Activated naive CD4-positive, alpha-beta T cell treated with anti-CD3 and anti-CD28 coated beads for 36 hours (primary cell): ENCODE measurements at regions of chr7 and their contacts with region 1.

Region 1: DNA sequence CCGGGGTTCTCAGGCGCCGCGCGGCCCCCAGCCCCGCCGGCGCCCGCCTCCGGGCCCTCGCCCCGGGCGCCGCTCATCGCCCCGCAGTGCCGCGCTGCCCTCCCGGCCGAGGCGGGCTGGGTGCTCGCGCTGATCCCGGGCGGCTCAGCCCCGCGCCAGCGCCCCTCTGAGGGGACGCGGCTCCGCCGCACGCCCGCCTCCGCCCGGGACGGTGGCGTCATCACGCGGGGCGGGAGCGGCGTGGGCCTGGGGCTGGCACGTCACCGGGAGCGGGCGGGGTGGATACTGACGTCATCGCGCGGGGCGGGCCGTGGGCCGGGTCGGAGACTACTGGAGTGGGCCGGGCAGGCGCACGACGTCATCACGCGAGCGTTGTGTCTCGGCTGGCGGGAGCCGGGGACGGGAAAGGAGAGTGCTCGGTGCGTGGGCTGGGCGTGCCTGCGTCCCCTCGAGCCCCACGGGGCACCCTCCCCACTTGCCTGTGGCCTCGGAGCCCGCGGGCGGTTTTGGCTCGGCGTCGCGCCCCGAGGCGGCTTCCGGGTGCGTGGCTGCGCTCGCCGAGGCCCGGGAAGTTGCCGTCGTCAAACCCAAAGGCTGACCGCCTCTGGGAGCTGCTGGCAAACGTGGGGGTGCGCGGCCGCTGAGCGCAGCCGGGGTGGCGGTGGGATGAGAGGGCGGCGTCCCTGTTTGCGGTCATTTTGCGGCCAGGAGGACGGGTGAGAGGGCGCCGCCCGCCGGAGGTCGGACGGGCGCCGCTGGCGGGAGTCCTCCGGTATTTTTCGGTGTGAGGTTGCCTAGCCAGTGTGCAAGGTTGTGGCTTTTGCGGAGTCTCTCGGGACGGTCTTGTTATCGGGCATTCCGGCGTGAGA is at the start of gene ESYT2:
- DNase-seq: peak; percentile 98
- H3K4me3 Mint-ChIP-seq: peak within 1 kb of the TSS; percentile 98
- H3K27ac Mint-ChIP-seq: peak within 1 kb of the TSS; percentile 94
- H3K4me1 Mint-ChIP-seq: peaks cover 27% of the 10 kb centered on the region
- H3K27me3 Mint-ChIP-seq: no peaks in the 10 kb centered on the region
- total RNA-seq, gene ESYT2: 41.7 to 44.3 TPM

Region 2: DNA sequence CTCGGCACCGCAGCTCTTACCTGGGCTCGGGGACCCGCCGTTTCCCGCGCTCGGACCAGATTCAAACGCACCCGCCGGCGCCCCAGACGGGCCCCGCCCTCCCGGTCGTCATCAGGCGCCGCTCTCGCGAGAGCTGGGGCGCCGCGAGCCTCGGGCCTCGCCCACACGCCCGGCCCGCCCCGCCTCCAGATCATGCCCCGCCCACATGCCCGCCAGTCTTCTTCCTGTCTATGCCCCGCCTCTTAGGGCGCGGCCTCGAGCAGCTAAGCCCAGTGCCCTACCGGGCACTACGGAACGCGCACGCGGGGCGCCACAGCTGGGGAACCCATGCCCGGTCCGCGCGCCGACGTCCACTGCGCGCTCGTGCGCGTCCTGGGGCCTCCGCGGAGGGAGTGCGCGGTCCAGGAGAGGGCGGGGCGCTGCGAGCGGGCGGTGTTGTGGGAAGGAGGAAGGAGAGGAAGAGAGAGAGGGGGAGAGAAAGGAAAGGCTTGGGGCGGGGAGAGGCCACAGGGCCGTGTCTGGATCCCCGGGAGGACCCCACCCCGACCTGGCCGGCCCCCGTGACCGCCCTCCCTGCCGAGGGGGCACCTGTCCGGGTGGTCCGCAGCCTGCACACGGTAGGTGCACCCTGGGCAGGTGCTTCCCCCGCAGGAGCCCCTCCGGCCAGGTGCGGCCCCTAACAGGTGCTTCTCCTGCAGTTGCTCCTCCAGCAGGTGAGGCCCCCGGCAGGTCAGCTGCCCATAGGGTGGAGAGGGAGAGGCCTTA is 124.7 kb before region 1 on chr7 and contains the start of gene NCAPG2:
- CTCF ChIA-PET with region 1: no interaction called
- intact Hi-C with region 1: loop called (anchors 1 kb)
- DNase-seq: peak; percentile 98
- H3K4me3 Mint-ChIP-seq: peak within 1 kb of the TSS; percentile 82
- H3K27ac Mint-ChIP-seq: peak within 1 kb of the TSS; percentile 85
- H3K4me1 Mint-ChIP-seq: peaks cover 38% of the 10 kb centered on the region
- H3K27me3 Mint-ChIP-seq: no peaks in the 10 kb centered on the region
- total RNA-seq, gene NCAPG2: 145 to 149 TPM

Region 3: DNA sequence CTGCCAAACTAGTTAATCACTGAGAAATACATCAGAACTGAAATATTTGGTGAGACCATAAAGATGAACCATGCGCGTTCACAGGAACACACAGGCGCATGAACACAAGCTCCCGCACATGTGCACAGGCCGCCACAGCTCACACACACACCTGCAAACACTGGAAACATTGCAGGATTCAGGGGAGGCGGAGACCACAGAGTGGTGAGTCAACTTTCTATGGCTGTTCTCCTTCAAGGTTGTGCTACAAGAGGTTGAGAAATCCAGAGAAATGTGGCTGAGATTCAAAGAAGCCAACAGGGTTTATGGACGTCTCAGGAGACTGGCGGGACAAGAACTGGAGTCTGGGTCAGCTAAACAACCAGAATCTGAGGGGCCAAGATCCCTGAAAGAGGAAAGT is 18.1 kb before region 1 on chr7:
- CTCF ChIA-PET with region 1: interaction called, 10 read pairs
- intact Hi-C with region 1: loop called (anchors 1 kb)
- DNase-seq: peak; percentile 82
- H3K4me3 Mint-ChIP-seq: peak overlapping the region; percentile 62
- H3K27ac Mint-ChIP-seq: peak overlapping the region; percentile 95
- H3K4me1 Mint-ChIP-seq: peaks cover 81% of the 10 kb centered on the region
- H3K27me3 Mint-ChIP-seq: no peaks in the 10 kb centered on the region

Region 4: DNA sequence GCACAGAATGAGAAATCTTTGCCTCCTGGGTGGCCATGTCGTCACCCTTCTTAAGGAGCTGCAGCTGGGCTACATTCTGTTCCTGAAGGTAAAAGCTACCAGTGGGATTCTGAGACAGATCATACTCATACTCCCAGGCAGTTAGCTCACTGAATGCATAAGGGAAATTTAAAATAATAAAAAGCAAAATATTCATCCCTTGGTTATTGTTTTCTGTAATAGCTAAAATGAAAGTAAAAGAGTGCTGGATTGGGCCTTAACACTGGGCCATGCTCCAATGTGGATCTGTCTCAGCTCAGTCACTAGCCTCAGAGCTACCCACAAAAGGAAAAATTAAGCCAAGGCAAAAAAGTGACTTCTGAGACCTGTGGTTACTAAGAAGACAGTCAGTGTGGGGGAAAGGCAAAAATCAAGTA is 17.9 kb after region 1 on chr7:
- CTCF ChIA-PET with region 1: interaction called, 4 read pairs
- intact Hi-C with region 1: loop called (anchors 1 kb)
- DNase-seq: peak; percentile 28
- H3K4me3 Mint-ChIP-seq: peak overlapping the region; percentile 74
- H3K27ac Mint-ChIP-seq: peak overlapping the region; percentile 97
- H3K4me1 Mint-ChIP-seq: peaks cover 34% of the 10 kb centered on the region
- H3K27me3 Mint-ChIP-seq: no peaks in the 10 kb centered on the region

Region 5: GRCh38 chr7:158863611-158864506 is 34.3 kb after region 1 on chr7:
- CTCF ChIA-PET with region 1: interaction called, 3 read pairs
- intact Hi-C with region 1: loop called (anchors 1 kb)
- DNase-seq: peak; percentile 72
- H3K4me3 Mint-ChIP-seq: peak overlapping the region; percentile 78
- H3K27ac Mint-ChIP-seq: peak overlapping the region; percentile 91
- H3K4me1 Mint-ChIP-seq: peaks cover 40% of the 10 kb centered on the region
- H3K27me3 Mint-ChIP-seq: no peaks in the 10 kb centered on the region